Lower leg skin (tissue), 4 donors: ENCODE measurements at regions of chr1 and their contacts with region 1.

Region 1: GRCh38 chr1:243354511-243355153 is 98.8 kb downstream of the SDCCAG8 start:
- DNase-seq: no peak
- H3K4me3 ChIP-seq: no peak overlapping the region
- CTCF ChIP-seq: no peak
- POLR2A ChIP-seq: no peak

Region 2: DNA sequence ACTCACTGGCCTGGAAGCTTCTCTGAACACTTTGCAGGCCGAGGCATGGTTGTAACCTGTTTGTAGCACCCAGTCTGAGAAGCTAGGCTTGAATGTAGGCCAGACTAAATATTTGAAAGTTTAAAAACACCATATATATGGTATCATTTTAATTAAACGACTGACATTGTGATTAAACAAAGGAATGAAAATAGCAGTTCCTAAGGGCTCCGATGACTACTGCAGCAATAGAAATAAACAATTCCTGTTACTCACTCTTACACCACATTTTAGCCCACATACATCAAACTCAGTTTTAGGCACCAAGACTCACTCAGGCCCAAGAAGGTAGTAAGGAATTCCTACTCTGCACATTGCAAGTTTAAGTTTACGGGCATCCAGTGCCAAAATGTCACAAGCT is 214.2 kb after region 1 on chr1:
- intact Hi-C with region 1: no loop called
- DNase-seq: no peak
- H3K4me3 ChIP-seq: no peak overlapping the region
- CTCF ChIP-seq: no peak
- POLR2A ChIP-seq: no peak

Region 3: DNA sequence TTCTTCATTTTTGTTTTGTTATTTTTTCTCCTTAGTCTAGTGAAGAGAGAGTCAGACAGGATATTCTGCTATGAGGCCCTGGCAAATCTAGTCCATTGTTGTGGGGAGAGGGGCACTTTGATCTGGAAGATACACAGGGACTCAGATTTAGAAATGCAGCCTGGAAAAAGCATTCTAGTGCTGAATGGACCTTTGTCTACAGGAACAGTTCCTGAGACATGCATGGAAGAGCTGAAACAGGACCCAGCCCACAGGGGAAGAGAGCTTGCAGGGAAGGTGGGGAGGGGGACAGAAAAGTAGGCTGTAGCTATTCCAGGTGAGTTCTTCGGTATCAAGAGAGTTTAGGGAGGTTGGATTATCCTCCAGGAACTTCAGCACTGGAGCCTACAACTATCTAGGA is 396.9 kb after region 1 on chr1:
- intact Hi-C with region 1: loop called (anchors 5 kb)
- DNase-seq: no peak
- H3K4me3 ChIP-seq: no peak overlapping the region
- CTCF ChIP-seq: no peak
- POLR2A ChIP-seq: no peak